A673 (cell line): ENCODE measurements at regions of chr21 and their contacts with region 1.

Region 1: DNA sequence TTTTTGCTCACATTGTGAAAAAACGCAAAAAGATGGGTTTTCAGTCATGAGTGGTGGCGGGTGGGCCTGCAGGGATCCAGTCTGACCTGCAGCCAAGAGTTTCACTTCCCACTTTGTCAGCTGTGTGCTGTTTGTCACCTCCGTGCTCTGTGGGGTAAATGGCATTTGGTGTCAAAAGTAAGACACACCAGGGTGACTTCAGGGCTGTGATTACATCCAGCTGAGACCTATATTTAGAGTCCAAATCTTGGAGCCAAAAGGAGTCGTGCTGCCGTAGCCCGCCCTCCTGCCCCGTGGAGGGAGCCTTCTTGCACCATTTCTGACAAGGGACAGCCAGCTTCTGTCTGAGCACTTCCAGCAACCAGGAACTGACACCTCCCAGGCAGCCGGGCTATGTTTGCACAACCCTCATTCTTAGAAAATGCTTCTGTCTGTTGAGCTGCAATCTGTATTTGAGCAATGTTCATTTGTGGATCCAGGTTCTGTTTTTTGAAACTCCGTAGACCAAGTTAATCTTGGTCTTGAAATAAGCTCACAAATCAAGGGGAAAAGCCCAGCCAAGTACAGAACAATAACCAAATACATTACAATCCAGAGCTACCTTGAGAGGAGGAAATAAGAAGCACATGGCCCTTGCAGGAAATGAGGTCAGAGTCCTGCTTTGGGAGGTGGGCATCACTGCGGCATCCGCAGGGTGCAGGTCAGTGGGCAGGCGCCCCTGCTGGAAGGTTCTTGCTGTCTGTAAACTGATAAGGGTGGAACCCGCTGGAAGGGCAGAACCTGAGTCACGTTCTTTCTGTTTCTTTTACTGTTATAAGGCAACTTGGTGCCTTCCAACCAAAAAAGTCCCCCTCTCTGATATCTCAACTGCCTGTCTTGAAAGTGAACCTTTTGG is 14.4 kb downstream of the ABCG1 start:
- DNase-seq: no peak
- H3K4me3 ChIP-seq: no peak overlapping the region
- H3K27ac ChIP-seq: no peak overlapping the region
- H3K4me1 ChIP-seq: peaks cover 37% of the 10 kb centered on the region
- H3K27me3 ChIP-seq: no peaks in the 10 kb centered on the region
- CTCF ChIP-seq: no peak

Region 2: GRCh38 chr21:42401159-42401558 is 167.8 kb after region 1 on chr21:
- CTCF ChIA-PET with region 1: interaction called, 10 read pairs
- POLR2A ChIA-PET with region 1: no interaction called
- intact Hi-C with region 1: no loop called
- DNase-seq: peak; percentile 63
- H3K4me3 ChIP-seq: no peak overlapping the region
- H3K27ac ChIP-seq: no peak overlapping the region
- H3K4me1 ChIP-seq: peaks cover 4% of the 10 kb centered on the region
- H3K27me3 ChIP-seq: no peaks in the 10 kb centered on the region
- CTCF ChIP-seq: no peak